Activated B cell treated with CpG ODN at 0.5 μM for 24 hours (primary cell): ENCODE measurements at regions of chr18 and their contacts with region 1.

Region 1: GRCh38 chr18:13159579-13159978 is 59.0 kb upstream of the LDLRAD4 start:
- DNase-seq: no peak
- ATAC-seq: peak; percentile 64
- H3K4me3 Mint-ChIP-seq: no peak overlapping the region
- H3K27ac Mint-ChIP-seq: no peak overlapping the region
- H3K4me1 Mint-ChIP-seq: peaks cover 3% of the 10 kb centered on the region
- H3K27me3 Mint-ChIP-seq: no peaks in the 10 kb centered on the region
- CTCF ChIP-seq: peak; percentile 73

Region 2: GRCh38 chr18:12726774-12727550 is 432.6 kb before region 1 on chr18:
- CTCF ChIA-PET with region 1: interaction called, 13 read pairs
- POLR2A ChIA-PET with region 1: no interaction called
- intact Hi-C with region 1: loop called (anchors 1 kb)
- DNase-seq: no peak
- ATAC-seq: peak; percentile 60
- H3K4me3 Mint-ChIP-seq: no peak overlapping the region
- H3K27ac Mint-ChIP-seq: no peak overlapping the region
- H3K4me1 Mint-ChIP-seq: no peaks in the 10 kb centered on the region
- H3K27me3 Mint-ChIP-seq: no peaks in the 10 kb centered on the region
- CTCF ChIP-seq: peak; percentile 88

Region 3: GRCh38 chr18:12890506-12890905 is 269.1 kb before region 1 on chr18:
- CTCF ChIA-PET with region 1: no interaction called
- POLR2A ChIA-PET with region 1: no interaction called
- intact Hi-C with region 1: loop called (anchors 2 kb)
- DNase-seq: no peak
- ATAC-seq: no peak
- H3K4me3 Mint-ChIP-seq: no peak overlapping the region
- H3K27ac Mint-ChIP-seq: no peak overlapping the region
- H3K4me1 Mint-ChIP-seq: peaks cover 28% of the 10 kb centered on the region
- H3K27me3 Mint-ChIP-seq: peaks cover 7% of the 10 kb centered on the region
- CTCF ChIP-seq: no peak

Region 4: GRCh38 chr18:13112982-13113381 is 46.6 kb before region 1 on chr18:
- CTCF ChIA-PET with region 1: interaction called, 10 read pairs
- POLR2A ChIA-PET with region 1: no interaction called
- intact Hi-C with region 1: loop called (anchors 1 kb)
- DNase-seq: no peak
- ATAC-seq: no peak
- H3K4me3 Mint-ChIP-seq: no peak overlapping the region
- H3K27ac Mint-ChIP-seq: no peak overlapping the region
- H3K4me1 Mint-ChIP-seq: no peaks in the 10 kb centered on the region
- H3K27me3 Mint-ChIP-seq: no peaks in the 10 kb centered on the region
- CTCF ChIP-seq: no peak

Region 5: DNA sequence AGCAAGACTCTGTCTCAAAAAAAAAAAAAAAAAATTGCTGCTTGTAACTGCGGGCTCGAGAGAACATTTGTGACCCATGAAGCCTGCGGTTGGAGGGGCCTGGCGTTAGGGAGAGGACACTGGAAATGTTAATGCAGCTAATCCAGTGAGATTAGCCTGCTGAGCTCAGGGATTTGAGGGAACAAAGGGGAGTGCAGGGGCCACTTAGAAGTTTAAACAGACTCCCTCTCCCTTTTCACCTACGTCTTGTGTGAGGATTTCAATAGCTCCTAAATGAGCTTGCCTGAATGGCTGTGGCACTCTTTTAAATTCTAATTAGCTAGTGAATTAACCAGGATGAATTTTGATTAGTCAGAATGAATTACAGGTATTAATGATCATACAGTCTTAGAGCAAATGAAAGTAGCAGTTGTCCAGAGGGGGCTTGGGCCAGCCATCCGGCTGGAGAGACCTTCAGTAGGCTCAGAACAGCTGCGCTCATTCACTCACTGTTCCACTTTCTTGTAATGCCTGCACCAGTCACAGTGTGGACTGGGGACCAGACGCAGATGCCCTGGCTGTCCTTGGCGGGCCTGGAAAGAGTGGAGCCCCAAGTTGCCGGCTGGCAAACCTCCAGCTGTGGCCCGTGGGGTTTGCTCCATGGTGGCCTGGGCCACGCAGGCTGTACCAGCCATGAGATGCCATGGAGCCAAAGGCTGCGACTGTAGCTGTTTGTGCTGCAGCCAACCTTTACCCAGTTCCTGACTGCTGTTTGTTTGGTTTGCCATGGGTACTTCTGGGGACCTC is 79.8 kb after region 1 on chr18:
- CTCF ChIA-PET with region 1: no interaction called
- POLR2A ChIA-PET with region 1: no interaction called
- intact Hi-C with region 1: no loop called
- DNase-seq: no peak
- ATAC-seq: no peak
- H3K4me3 Mint-ChIP-seq: no peak overlapping the region
- H3K27ac Mint-ChIP-seq: no peak overlapping the region
- H3K4me1 Mint-ChIP-seq: no peaks in the 10 kb centered on the region
- H3K27me3 Mint-ChIP-seq: peaks cover 5% of the 10 kb centered on the region
- CTCF ChIP-seq: no peak

Region 6: GRCh38 chr18:13381944-13382365 is 222.4 kb after region 1 on chr18:
- CTCF ChIA-PET with region 1: no interaction called
- POLR2A ChIA-PET with region 1: no interaction called
- intact Hi-C with region 1: no loop called
- DNase-seq: no peak
- ATAC-seq: peak; percentile 79
- H3K4me3 Mint-ChIP-seq: peak overlapping the region; percentile 82
- H3K27ac Mint-ChIP-seq: peak overlapping the region; percentile 87
- H3K4me1 Mint-ChIP-seq: peaks cover 25% of the 10 kb centered on the region
- H3K27me3 Mint-ChIP-seq: no peaks in the 10 kb centered on the region
- CTCF ChIP-seq: no peak